Breast epithelium (tissue), 4 donors: ENCODE measurements at regions of chrX and their contacts with region 1.

Region 1: DNA sequence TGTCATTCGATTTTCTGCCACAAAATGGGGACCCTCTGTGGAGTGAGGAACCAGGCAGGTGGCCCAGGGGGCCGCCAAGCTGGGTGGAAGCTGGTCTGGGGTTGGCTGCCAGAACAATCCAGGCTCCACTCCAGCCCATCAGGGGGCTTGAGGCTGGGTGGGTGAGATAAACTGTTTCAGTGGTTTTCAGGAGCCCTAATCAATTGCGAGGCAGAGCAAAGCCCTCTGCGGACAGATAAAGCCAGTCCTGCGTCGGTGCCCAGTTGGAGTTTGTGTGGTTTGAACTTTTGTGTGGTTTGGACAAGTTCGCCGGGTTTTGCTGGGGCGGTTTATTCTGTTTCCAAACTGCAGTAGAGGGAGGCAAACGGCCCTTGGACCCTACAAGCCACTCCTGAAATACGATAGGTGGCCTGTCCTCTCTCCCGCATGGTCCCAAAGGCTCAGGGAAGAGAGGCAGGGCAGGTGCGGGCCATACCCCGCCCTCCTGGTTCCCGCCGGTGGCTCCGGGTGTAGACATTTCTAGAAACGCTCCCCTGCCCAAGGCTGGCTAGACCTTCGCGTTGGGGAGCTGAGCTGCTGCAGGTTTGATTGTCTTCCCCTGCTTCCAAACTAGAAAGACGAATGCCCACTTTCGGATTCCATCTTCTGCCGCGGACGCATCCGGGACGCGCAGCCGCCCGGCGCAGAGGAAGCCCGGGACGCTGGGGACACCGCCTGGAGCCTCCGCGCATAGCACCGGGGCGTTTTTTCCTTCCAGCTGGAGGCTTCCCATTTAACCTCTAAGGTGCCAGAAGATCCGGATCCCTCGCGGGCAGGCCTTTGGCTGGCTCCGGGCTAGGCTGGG is 169.0 kb upstream of the BCOR start:
- DNase-seq: peak; percentile 27 to 53
- H3K4me3 ChIP-seq: peak overlapping the region; percentile 32 to 66 (median 50)
- H3K27ac ChIP-seq: peak overlapping the region; percentile 40 to 80
- H3K4me1 ChIP-seq: no peaks in the 10 kb centered on the region
- H3K27me3 ChIP-seq: peaks cover 0 to 43% of the 10 kb centered on the region in 2 donors
- CTCF ChIP-seq: peak in 2 of 3 donors; percentile 40 to 63
- POLR2A ChIP-seq: no peak

Region 2: GRCh38 chrX:40199704-40200103 is 67.0 kb before region 1 on chrX:
- intact Hi-C with region 1: loop called (anchors 10 kb)
- DNase-seq: peak; percentile 52 to 61
- H3K4me3 ChIP-seq: no peak overlapping the region
- H3K27ac ChIP-seq: no peak overlapping the region
- H3K4me1 ChIP-seq: no peaks in the 10 kb centered on the region
- H3K27me3 ChIP-seq: peaks cover 0 to 23% of the 10 kb centered on the region in 2 donors
- CTCF ChIP-seq: no peak
- POLR2A ChIP-seq: no peak

Region 3: GRCh38 chrX:41265615-41266014 is 998.9 kb after region 1 on chrX:
- intact Hi-C with region 1: no loop called
- DNase-seq: no peak
- H3K4me3 ChIP-seq: peak overlapping the region in 2 of 3 donors; percentile 8 to 12
- H3K27ac ChIP-seq: no peak overlapping the region
- H3K4me1 ChIP-seq: no peaks in the 10 kb centered on the region
- H3K27me3 ChIP-seq: peaks cover 0 to 20% of the 10 kb centered on the region in 2 donors
- CTCF ChIP-seq: no peak
- POLR2A ChIP-seq: no peak